CD4-positive, alpha-beta T cell (primary cell): ENCODE measurements at regions of chr15 and their contacts with region 1.

Region 1: GRCh38 chr15:100330629-100331215 is 11.1 kb downstream of the ADAMTS17 start:
- DNase-seq: peak in 10 of 14 experiments; percentile 22 to 87 (median 46)
- ATAC-seq: peak; percentile 90
- H3K4me3 ChIP-seq: peak overlapping the region; percentile 44
- H3K4me3 Mint-ChIP-seq: peak overlapping the region; percentile 54
- H3K27ac ChIP-seq: peak overlapping the region in 1 of 2 donors; percentile 46
- H3K27ac Mint-ChIP-seq: peak overlapping the region; percentile 50
- H3K4me1 ChIP-seq: peaks cover 72% of the 10 kb centered on the region
- H3K4me1 Mint-ChIP-seq: peaks cover 87% of the 10 kb centered on the region
- H3K27me3 ChIP-seq: no peaks in the 10 kb centered on the region
- H3K27me3 Mint-ChIP-seq: no peaks in the 10 kb centered on the region
- CTCF ChIP-seq: no peak

Region 2: DNA sequence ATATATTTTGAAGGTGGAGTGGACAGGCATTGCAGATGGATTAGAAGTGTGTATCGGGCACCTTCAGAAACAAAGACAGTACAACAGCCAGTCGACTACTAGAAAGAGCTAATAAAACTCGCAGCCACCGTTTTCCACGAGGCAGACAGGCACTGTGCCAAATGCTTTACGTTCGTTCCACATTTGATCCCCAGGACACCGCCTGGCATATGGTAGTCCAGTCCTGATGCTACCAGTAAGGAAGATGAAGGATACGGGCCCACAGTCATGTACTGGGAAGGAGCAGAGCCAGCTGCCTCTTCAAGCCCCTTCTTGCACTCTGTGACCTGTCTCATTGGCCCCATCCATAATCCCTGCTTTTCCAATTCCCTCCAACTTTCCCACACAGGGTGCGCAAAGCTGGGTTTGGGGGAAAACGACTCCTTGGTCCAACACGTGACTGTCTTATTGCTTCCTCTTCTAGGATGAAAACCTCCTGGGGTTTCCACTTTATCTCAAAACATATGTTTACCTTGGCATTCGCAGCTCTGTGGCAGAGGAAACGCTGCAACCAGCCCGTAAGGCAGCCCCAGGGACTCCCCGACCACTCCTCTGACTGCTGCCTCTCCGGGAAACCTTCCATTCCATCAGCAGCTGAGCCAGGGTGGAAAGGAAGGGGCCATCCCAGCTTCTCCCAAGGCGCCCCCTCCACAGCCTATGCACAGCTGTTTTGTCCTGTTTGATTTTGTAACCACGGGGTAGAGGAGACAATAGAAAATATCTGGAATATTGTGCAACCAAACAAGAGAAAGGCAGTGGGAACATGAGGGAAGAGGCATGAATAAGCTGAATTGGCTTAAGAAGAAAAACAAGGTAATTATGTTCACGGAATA is 96.3 kb before region 1 on chr15:
- CTCF ChIA-PET with region 1: no interaction called
- POLR2A ChIA-PET with region 1: interaction called, 3 read pairs
- intact Hi-C with region 1: loop called in 1 of 2 experiments (anchors 5 kb)
- DNase-seq: no peak
- ATAC-seq: no peak
- H3K4me3 ChIP-seq: no peak overlapping the region
- H3K4me3 Mint-ChIP-seq: no peak overlapping the region
- H3K27ac ChIP-seq: no peak overlapping the region
- H3K27ac Mint-ChIP-seq: no peak overlapping the region
- H3K4me1 ChIP-seq: peaks cover 11% of the 10 kb centered on the region
- H3K4me1 Mint-ChIP-seq: peaks cover 13% of the 10 kb centered on the region
- H3K27me3 ChIP-seq: no peaks in the 10 kb centered on the region
- H3K27me3 Mint-ChIP-seq: no peaks in the 10 kb centered on the region
- CTCF ChIP-seq: no peak